PC-9 (cell line): ENCODE measurements at regions of chr6 and their contacts with region 1.

Region 1: GRCh38 chr6:29617782-29618557 is 15.0 kb downstream of the GABBR1 start:
- DNase-seq: no peak
- H3K4me3 ChIP-seq: no peak overlapping the region
- H3K27ac ChIP-seq: no peak overlapping the region
- H3K4me1 ChIP-seq: no peaks in the 10 kb centered on the region
- H3K27me3 ChIP-seq: no peaks in the 10 kb centered on the region
- CTCF ChIP-seq: no peak; the same call in 1 of the 2 replicates

Region 2: GRCh38 chr6:29602564-29603361 is 15.2 kb before region 1 on chr6:
- CTCF ChIA-PET with region 1: interaction called, 13 read pairs
- POLR2A ChIA-PET with region 1: no interaction called
- intact Hi-C with region 1: no loop called
- DNase-seq: no peak
- H3K4me3 ChIP-seq: no peak overlapping the region
- H3K27ac ChIP-seq: no peak overlapping the region
- H3K4me1 ChIP-seq: no peaks in the 10 kb centered on the region
- H3K27me3 ChIP-seq: no peaks in the 10 kb centered on the region
- CTCF ChIP-seq: peak; percentile 22; the same call in 1 of the 2 replicates

Region 3: DNA sequence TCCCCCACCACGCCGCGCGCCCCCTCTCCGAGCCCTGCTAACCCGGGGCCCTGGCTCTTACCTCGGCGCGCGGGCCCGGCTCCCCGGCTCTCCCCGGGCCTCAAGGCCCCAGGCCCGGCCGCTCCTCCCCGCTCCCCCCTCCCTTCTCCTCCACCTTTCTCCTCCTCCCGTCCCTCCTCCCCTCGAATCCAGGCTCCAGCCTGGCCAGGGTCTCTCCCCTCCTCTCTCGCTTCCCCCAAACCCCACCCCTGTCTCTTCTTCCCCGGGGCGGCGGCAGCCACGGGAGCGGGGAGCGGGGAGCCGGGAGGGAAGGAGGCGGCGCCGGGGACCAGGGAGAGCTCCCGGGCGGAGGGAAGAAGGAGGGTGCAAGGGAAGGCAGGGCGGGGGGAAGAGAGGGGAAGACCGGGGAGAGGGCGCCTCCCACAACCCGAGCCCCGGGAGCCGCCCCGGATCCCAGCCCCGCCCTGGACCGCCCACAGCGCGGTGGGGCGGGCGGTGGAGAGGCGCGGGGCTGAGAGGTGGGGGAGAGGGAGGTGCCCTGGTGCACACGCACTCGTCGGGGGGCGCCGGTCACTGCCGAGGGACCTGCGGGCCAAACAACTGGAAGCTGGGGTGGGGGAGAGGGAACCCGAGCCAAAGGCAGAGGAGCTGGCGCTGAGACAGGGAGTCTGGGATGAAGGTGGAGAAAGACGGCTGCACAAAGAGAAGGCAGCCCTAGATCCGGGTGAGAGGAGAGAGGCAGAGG is 15.0 kb after region 1 on chr6 and contains the start of gene GABBR1:
- CTCF ChIA-PET with region 1: no interaction called
- POLR2A ChIA-PET with region 1: interaction called, 19 read pairs
- intact Hi-C with region 1: no loop called
- DNase-seq: peak; percentile 65 to 93
- H3K4me3 ChIP-seq: peak within 1 kb of the TSS; percentile 68
- H3K27ac ChIP-seq: no peak within 1 kb of the TSS
- H3K4me1 ChIP-seq: peaks cover 5% of the 10 kb centered on the region; the same call in 1 of the 2 replicates
- H3K27me3 ChIP-seq: no peaks in the 10 kb centered on the region
- CTCF ChIP-seq: no peak
- total RNA-seq, gene GABBR1: 36.3 and 43.6 TPM in 2 replicates

Region 4: DNA sequence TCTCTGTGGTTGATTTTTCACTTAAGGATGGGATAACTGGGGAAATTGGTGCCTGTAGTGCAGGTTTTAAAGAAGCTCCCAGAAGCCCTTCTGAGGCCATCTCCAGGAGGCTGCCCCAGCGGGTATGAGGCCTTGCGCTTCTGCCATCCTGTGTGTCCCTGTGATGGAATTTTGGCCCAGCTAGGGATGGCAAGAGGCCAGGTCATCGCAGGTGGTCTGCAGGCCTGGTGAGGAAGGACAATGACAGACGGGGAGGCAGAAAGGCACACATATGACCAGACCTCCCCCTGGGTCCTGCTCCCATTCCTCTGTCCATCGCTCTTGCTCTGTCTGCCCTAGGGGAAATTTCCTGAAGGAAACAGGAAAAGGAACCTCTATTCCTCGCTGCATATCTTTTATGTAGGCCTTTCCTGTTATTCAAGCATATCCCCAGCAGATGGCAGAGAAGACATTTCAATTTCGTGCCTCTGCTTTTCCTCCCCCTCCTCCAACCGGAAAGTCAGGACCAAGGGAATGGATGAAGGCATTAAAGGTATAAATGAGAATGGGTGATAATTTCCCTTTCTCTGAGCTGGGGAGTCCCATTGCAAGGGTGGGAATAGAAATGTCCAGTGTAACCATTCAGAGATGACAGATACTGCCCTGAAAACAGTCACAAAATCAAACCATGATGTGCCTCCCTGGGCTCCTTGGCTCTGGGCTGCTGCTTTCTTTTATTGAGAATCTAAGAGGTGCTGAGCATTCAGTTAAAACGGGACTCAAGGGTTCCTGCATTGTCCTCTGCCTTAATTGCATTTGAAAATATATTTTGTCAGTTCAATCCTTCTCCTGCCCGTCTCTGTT is 87.6 kb after region 1 on chr6:
- CTCF ChIA-PET with region 1: no interaction called
- POLR2A ChIA-PET with region 1: no interaction called
- intact Hi-C with region 1: no loop called
- DNase-seq: peak in 1 of 2 experiments; percentile 47
- H3K4me3 ChIP-seq: no peak overlapping the region
- H3K27ac ChIP-seq: no peak overlapping the region
- H3K4me1 ChIP-seq: no peaks in the 10 kb centered on the region
- H3K27me3 ChIP-seq: peaks cover 11% of the 10 kb centered on the region; the same call in 1 of the 2 replicates
- CTCF ChIP-seq: peak; percentile 74

Region 5: GRCh38 chr6:30424549-30424948 is 806.6 kb after region 1 on chr6:
- CTCF ChIA-PET with region 1: no interaction called
- POLR2A ChIA-PET with region 1: no interaction called
- intact Hi-C with region 1: no loop called
- DNase-seq: no peak
- H3K4me3 ChIP-seq: no peak overlapping the region
- H3K27ac ChIP-seq: no peak overlapping the region
- H3K4me1 ChIP-seq: no peaks in the 10 kb centered on the region
- H3K27me3 ChIP-seq: peaks cover 79% of the 10 kb centered on the region
- CTCF ChIP-seq: no peak